ENCODE measurements at regions of chr3 and their contacts with region 1.

Region 1: DNA sequence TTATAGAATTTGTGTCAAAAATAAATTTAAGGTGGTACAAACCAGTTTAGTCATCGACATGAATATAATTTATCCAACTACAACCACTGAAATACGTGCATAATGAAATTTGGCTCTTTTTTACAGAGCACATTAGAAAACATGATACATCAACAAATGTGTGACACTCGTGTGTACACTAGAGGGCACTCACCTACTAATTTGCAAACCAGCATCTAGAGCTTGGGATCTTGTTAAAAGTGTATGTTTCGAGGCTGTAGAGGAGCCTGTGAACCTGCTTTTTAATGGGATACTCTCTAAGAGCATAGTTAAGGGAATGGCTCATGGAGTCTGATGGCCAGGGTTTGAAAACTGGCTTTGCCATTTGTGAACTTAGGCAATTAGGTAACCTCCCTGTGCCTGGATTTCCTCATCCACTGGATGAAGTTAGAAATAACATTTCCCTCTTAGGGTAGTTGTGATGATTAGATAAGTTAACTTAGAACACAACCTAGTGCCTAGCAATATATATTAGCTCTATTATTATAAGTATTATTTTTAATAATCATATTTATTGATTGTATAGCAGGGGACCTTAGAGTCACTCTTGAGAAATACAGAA is 8.8 kb upstream of the CPOX start:
- DNase-seq: peak in 3 of 10 donors; percentile 21 to 45 (median 26)

Region 2: DNA sequence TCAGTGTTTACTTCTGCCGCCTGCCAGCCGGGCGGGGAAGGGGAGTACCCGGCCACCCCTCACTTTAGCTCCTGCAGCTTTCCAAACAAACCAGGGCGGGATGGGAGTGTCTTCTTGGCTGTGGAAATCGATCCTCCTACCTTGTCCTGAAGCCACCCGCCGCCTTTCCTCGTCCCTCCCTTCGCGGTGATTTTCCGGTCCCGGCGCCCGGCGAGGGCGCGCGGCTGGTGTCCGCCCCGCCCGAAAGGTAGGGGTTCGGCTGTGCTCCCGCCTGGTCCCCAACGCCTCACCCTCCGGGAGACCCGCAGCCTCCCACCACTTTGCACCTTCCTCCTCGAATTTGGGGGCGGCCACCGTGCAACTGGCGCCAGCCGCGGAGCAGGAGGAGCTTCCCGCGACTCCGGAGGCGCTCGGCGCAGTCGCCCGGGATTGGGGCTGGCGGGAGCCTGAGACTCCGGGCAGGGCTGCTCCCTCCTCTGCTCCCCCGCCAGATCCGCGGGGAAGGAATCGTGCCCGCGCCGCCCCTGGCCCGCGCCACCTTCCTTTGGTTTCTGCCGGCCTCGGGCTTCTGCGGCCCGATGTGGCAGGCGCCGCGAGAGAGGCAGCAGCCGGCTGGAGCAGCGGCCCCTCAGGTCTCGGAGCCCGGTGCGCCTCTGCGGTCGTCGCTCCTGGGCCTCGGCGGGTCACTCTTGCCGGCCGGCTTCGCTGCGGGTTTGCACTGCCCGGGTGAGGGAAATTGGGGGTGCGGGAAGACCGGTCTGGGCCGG is 130.3 kb after region 1 on chr3:
- intact Hi-C with region 1: loop called (anchors 10 kb)
- DNase-seq: peak; percentile 54 to 95 (median 68)

Region 3: DNA sequence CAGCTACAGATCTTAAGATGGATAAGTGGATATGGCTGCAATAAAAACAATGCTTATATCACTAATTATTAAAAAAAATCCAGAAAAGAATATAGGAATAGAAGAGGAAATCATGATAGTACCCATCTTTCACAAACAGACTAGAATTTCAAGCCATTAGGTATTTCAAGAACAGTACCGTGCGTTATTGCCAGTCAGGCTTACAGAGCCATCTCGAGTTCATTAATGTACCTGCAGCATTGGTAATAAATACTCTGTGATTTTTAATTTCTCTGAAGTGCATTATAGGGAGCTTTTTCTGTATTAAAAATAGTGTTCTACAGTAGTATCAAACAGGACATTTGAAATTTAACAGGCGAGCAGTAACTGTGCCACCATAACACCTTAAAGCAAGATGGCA is 196.6 kb after region 1 on chr3:
- intact Hi-C with region 1: loop called (anchors 5 kb)
- DNase-seq: no peak

Region 4: DNA sequence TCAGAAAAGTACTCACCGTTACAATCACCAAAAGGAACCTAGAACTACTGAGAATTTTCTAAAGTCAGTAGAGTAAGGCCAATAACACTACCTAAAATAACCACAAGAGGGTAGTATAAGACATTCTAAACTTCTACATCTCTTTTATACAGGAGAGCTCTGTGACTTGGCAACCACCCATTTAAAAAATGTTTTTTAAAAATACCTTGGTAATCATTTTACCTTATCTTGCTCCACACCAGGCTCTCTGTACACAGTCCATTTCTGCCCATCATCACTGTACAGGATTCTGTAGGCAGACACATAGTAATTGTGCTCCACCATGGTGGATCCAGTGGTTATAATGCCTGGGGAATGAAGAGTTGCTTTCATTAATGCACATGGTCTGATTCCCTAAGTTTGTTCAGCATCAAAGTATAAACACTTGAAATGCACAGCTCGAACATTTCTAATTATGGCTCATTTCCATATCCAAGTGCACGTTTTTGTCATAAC is 215.4 kb after region 1 on chr3:
- intact Hi-C with region 1: loop called (anchors 2 kb)
- DNase-seq: no peak

Region 5: DNA sequence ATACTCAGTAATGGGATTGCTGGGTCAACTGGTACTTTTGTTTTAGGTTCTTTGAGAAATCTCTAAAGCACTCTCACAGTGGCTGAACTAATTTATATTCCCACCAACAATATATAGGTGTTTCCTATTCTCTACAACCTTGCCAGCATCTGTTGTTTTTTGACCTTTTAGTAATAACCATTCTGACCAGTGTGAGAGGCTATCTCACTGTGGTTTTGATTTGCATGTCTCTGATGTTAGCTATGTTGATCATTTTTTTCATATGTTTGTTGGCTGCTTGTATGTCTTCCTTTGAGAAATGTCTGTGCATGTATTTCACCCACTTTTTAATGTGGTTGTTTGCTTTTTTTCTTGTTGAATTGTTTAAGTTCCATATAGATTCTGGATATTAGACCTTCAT is 397.5 kb after region 1 on chr3:
- intact Hi-C with region 1: loop called (anchors 5 kb)
- DNase-seq: no peak

Measured in posterior cingulate gyrus (tissue), 11 donors.